Activated CD4-positive, alpha-beta T cell treated with anti-CD3 and anti-CD28 coated beads for 36 hours (primary cell): ENCODE measurements at regions of chr11 and their contacts with region 1.

Region 1: DNA sequence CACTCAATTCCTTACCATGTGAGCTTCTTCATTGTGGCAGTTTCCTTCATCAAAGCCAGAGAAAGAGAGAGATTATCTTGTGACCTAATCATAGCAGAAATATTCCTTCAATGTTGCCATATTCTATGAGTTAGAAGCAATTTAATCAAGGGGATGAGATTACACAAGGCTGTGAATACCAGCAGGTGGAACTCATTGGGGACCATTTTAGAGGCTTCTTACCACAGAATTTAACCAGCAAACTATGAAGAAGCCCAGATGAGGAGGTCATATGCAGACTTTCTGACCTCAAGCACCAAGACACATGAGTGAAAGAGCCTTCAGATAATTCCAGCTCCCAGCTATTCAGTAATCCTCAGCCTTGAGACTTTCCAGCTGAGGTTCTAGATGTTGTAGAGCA is 51.3 kb downstream of the ADM start:
- DNase-seq: no peak
- ATAC-seq: no peak
- H3K4me3 Mint-ChIP-seq: no peak overlapping the region
- H3K27ac Mint-ChIP-seq: no peak overlapping the region
- H3K4me1 Mint-ChIP-seq: no peaks in the 10 kb centered on the region
- H3K27me3 Mint-ChIP-seq: peaks cover 20% of the 10 kb centered on the region

Region 2: GRCh38 chr11:10366568-10367370 is 10.6 kb after region 1 on chr11:
- CTCF ChIA-PET with region 1: interaction called, 13 read pairs
- POLR2A ChIA-PET with region 1: no interaction called
- intact Hi-C with region 1: no loop called
- DNase-seq: peak; percentile 84
- ATAC-seq: peak; percentile 95
- H3K4me3 Mint-ChIP-seq: peak overlapping the region; percentile 5
- H3K27ac Mint-ChIP-seq: peak overlapping the region; percentile 41
- H3K4me1 Mint-ChIP-seq: peaks cover 11% of the 10 kb centered on the region
- H3K27me3 Mint-ChIP-seq: peaks cover 7% of the 10 kb centered on the region